ENCODE measurements at regions of chr1 and their contacts with region 1.

Region 1: GRCh38 chr1:43671626-43672330 is 21.8 kb downstream of the KDM4A start:
- DNase-seq: no peak
- ATAC-seq: peak; percentile 53

Region 2: GRCh38 chr1:43454266-43455011 is 217.3 kb before region 1 on chr1:
- intact Hi-C with region 1: loop called (anchors 10 kb)
- DNase-seq: peak; percentile 81
- ATAC-seq: peak; percentile 88

Measured in Right ventricle myocardium inferior (tissue), 1 donor.